Body of pancreas (tissue), 4 donors: ENCODE measurements at regions of chr10 and their contacts with region 1.

Region 1: GRCh38 chr10:77983384-77984341 is 45.7 kb downstream of the POLR3A start:
- DNase-seq: no peak
- ATAC-seq: no peak
- H3K4me3 ChIP-seq: no peak overlapping the region
- H3K27ac ChIP-seq: no peak overlapping the region
- H3K4me1 ChIP-seq: peaks cover under 1% of the 10 kb centered on the region
- H3K27me3 ChIP-seq: no peaks in the 10 kb centered on the region
- CTCF ChIP-seq: no peak
- POLR2A ChIP-seq: no peak

Region 2: DNA sequence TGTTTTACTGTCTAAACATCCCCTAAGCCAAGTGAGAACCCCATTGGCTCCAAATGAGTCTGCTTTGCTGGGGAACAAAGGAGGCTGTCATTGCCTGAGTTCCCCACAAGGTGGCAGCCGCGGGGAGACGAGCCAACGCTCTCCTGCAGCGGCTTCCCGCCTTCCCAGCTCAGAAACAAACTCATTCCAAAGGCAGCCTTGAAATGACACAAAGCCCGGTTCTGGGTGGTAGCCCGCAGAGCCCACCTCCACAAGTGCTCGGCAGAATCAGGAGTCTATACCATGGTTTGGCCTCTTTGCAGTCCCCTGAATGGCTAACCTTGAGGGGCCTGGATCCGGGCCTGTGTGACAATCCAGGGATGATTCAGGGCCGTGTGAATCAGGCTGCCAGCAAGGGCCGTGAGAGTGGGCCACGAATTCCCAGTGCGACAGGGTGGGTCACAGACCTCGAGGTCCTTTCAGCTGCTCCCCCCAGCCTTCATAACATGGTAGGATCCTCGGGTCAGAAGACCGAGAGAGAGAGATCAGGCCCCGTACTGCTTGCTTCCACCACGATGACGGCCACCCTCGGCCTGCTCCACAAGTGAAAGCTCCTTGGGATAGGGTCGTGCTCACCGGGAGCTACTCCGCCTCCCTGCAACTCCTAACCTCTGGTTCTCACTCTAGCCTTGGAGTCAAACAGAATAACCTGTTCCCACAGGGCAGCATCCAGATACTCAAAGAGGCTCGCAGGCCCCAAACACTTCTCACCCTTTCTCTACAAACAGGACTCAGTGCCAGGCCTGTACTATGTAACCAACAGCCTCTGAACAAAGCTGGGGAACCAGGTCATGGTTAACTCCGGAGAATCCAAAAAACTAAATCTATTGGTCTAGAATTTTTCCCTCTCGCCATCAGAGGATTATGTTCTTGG is 136.7 kb before region 1 on chr10:
- intact Hi-C with region 1: loop called (anchors 10 kb)
- DNase-seq: peak; percentile 70 to 82 (median 77)
- ATAC-seq: peak; percentile 86
- H3K4me3 ChIP-seq: no peak overlapping the region
- H3K27ac ChIP-seq: peak overlapping the region in 1 of 4 donors; percentile 17
- H3K4me1 ChIP-seq: no peaks in the 10 kb centered on the region
- H3K27me3 ChIP-seq: no peaks in the 10 kb centered on the region
- CTCF ChIP-seq: peak; percentile 88 to 94 (median 92)
- POLR2A ChIP-seq: no peak